Vagina (tissue), 2 donors: ENCODE measurements at regions of chr17 and their contacts with region 1.

Region 1: GRCh38 chr17:10224582-10225195 is 26.3 kb upstream of the GAS7 start:
- DNase-seq: no peak
- H3K4me3 ChIP-seq: no peak overlapping the region
- H3K27ac ChIP-seq: no peak overlapping the region
- H3K4me1 ChIP-seq: no peaks in the 10 kb centered on the region
- H3K27me3 ChIP-seq: no peaks in the 10 kb centered on the region
- CTCF ChIP-seq: no peak
- POLR2A ChIP-seq: no peak

Region 2: DNA sequence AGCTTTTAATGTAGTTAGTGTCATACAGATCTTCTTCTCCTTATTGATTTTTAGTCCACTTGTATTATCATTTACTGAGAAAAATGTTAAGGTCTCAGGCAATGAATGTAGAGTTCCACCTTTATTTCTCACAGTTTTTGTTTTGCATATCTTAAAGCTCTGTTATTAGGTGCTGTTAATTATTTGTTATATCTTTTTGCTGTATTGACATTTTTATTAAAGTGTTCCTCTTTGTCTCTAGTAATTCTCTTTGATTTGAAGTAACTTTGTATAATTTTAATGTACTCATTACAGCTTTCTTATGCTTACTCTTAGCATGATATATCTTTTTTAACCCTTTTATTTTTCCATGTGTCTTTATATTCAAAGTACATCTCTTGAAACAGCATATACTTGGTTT is 601.7 kb before region 1 on chr17:
- intact Hi-C with region 1: no loop called
- DNase-seq: no peak
- H3K4me3 ChIP-seq: no peak overlapping the region
- H3K27ac ChIP-seq: no peak overlapping the region
- H3K4me1 ChIP-seq: no peaks in the 10 kb centered on the region
- H3K27me3 ChIP-seq: no peaks in the 10 kb centered on the region
- CTCF ChIP-seq: no peak
- POLR2A ChIP-seq: no peak

Region 3: GRCh38 chr17:11212792-11213191 is 988.1 kb after region 1 on chr17:
- intact Hi-C with region 1: loop called (anchors 5 kb)
- DNase-seq: peak in 1 of 2 donors; percentile 20
- H3K4me3 ChIP-seq: no peak overlapping the region
- H3K27ac ChIP-seq: no peak overlapping the region
- H3K4me1 ChIP-seq: no peaks in the 10 kb centered on the region
- H3K27me3 ChIP-seq: no peaks in the 10 kb centered on the region
- CTCF ChIP-seq: no peak
- POLR2A ChIP-seq: no peak